ENCODE measurements at regions of chr11 and their contacts with region 1.

Region 1: DNA sequence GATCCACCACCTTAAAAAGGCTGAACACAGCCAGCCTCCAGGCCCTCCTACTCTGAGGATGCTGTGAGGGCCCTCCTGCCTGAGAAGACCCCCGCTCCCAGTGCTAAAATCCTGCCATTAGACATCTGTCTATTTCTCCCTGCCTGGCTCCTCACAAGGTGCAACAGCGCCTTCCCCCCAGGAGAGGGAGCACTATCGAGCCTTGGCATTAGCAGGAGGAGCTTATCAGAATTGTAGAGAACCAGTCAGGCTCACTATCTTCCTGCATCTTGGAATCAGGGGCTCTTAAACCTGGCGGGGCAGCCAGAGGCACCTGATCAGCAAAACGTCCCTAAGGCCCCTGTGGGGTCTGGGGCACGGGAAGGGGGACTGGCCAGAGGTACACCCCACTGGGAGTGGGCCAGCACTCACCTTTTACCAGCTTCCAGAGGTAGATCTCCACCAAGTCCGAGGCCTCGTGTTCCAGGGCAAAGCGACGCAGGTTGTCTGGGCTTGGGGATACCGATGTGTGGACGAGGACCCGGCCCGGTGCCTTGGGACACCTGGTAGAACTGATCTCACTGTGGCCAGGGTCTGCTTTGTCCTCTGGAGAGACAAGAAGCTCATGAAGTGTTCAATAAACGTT is 28.7 kb downstream of the CHRDL2 start:
- DNase-seq: peak; percentile 49 to 81
- H3K4me3 ChIP-seq: no peak overlapping the region
- H3K27ac ChIP-seq: no peak overlapping the region
- H3K4me1 ChIP-seq: peaks cover 0 to 3% (median under 1%) of the 10 kb centered on the region in 4 experiments; a peak in 2 of 7 replicates
- H3K27me3 ChIP-seq: no peaks in the 10 kb centered on the region
- CTCF ChIP-seq: peak; percentile 87 to 97 (median 94)
- EP300 ChIP-seq: no peak
- POLR2A ChIP-seq: no peak
- RAD21 ChIP-seq: peak; percentile 66 to 79

Region 2: DNA sequence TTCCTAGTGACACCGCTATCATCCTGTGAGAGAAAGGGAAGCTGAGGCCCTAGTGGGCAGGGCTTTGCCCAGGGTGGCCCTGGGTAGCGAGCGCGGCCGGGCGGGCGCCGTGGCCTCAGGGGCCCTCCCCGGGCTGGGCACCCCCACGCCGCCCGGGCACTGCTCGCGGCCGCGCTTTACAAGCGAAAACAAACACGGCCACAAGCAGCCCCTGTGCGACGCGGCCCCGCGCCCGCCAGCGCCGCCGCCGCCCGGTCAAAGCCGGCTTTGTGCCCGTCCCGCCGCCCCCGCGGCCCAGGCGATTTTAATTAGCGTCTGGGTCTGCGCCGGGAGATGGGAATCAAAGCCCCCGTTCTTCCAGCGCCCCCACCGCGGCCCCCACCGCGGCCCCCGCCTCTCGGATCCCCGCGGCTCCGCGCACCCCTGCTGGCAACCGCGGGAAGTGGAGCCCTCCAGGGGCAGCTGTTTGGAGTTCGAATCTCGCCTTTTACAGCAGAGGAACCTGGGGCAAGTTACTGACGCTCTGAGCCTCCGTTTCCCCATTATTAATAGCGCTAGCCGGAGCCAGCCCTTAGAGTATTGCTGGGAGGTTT is 19.1 kb before region 1 on chr11:
- CTCF ChIA-PET with region 1: interaction called, 72 read pairs
- POLR2A ChIA-PET with region 1: interaction called, 3 read pairs
- DNase-seq: peak in 1 of 2 experiments; percentile 75
- H3K4me3 ChIP-seq: peak overlapping the region; percentile 40 to 64 (median 45)
- H3K27ac ChIP-seq: no peak overlapping the region
- H3K4me1 ChIP-seq: peaks cover 5 to 8% (median 7%) of the 10 kb centered on the region in 4 experiments; a peak in 6 of 7 replicates
- H3K27me3 ChIP-seq: peaks cover 0 to 12% (median 7%) of the 10 kb centered on the region in 4 experiments; a peak in 5 of 7 replicates
- CTCF ChIP-seq: peak in 2 of 3 experiments; percentile 9 to 29; a peak in 1 of 4 replicates
- EP300 ChIP-seq: no peak
- POLR2A ChIP-seq: no peak
- RAD21 ChIP-seq: no peak

Region 3: DNA sequence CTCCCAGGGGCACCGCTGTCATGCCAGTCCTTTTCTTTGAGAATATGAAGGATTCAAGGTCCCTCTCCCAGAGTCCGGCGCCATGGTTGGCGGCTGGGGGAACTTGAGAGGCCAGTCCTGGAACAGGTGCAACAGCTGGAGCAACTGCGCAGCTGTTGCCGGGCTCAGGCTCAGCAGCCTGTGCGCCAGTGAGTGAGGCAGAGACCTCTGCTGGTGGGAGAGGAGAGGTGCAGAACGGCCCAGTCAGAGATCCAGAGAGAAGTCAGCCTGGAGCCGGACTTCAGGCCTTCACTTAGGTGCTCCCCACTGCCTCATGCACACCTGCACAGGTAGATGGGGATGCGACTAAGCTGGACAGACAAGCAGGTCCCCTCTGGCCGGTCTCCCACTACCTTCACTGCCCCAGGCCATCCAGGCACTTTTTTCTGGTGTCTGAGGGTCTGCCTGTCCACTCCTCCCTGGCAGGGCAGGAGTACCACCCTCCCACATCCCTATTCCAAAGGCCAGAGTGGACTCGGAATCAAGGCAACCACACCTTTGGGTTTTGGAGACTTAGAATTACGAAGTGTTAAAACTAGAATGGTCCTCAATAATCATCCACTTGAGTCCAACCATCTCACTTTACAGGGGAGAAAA is 24.2 kb after region 1 on chr11:
- CTCF ChIA-PET with region 1: interaction called, 348 read pairs
- POLR2A ChIA-PET with region 1: interaction called, 5 read pairs
- DNase-seq: peak; percentile 47 to 80
- H3K4me3 ChIP-seq: no peak overlapping the region
- H3K27ac ChIP-seq: no peak overlapping the region
- H3K4me1 ChIP-seq: peaks cover 0 to 8% (median 0%) of the 10 kb centered on the region in 4 experiments; a peak in 3 of 7 replicates
- H3K27me3 ChIP-seq: peaks cover 22 to 37% (median 31%) of the 10 kb centered on the region in 4 experiments
- CTCF ChIP-seq: peak; percentile 95 to 98 (median 97)
- EP300 ChIP-seq: no peak
- POLR2A ChIP-seq: no peak
- RAD21 ChIP-seq: peak; percentile 83 to 92

Region 4: DNA sequence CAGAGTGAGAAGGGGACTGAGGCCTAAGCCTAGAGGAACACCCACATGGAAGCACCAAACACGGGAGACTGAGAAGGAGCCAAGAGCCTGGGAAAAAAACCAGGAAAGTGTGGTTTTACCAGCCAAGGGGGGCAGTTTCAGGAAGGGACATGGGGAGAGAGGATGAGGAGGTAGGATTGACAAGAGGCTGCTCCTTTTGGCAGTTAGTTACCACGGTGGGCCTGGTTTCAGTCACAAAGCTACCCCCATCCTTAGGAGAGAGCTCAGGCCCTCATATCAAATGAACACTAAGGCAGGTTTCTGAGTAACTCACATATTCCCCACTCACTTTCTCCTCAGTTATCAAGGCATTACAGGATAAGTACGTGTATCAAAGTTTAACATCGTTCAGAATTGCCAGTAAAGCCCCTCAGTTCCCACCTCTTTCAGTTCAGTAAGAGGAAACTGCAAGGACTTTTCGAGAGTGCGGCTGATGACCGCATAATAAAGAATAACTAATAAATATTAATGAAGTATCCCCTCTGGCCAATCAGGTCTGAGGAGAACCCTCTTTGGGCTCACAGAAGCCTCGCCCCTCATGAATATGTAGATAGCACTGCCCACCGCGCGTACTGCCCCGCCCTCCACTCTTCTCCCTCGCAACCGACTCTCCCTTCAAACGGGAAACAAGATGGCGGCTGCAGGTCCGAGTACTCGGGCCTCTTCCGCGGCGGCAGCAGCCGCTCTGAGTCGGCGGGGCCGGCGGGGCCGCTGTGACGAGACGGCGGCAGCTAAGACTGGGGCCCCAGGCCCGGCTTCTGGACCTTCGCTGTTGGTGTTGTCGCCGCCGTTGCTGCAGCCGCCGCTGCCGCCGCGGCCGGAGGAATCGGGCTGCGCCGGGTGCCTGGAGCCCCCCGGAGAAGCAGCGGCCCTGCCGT is 46.0 kb after region 1 on chr11 and contains the start of gene RNF169:
- CTCF ChIA-PET with region 1: interaction called, 19 read pairs
- POLR2A ChIA-PET with region 1: interaction called, 3 read pairs
- DNase-seq: peak; percentile 84 to 86
- H3K4me3 ChIP-seq: peak within 1 kb of the TSS; percentile 50 to 77 (median 59)
- H3K27ac ChIP-seq: peak within 1 kb of the TSS; percentile 83
- H3K4me1 ChIP-seq: peaks cover 3 to 6% (median 4%) of the 10 kb centered on the region in 4 experiments; a peak in 5 of 7 replicates
- H3K27me3 ChIP-seq: peaks cover 0 to 2% (median 0%) of the 10 kb centered on the region in 4 experiments; a peak in 1 of 7 replicates
- CTCF ChIP-seq: no peak
- EP300 ChIP-seq: no peak
- POLR2A ChIP-seq: peak; percentile 63 to 67
- RAD21 ChIP-seq: no peak
- total RNA-seq, gene RNF169: 12.1 and 12.5 TPM in 2 replicates

Measured in H1 (cell line).